ENCODE measurements at regions of chr5 and their contacts with region 1.

Region 1: GRCh38 chr5:68424799-68425537 is 209.4 kb downstream of the PIK3R1 start:
- DNase-seq: no peak
- ATAC-seq: no peak
- H3K4me3 ChIP-seq: no peak overlapping the region
- H3K27ac ChIP-seq: no peak overlapping the region
- H3K4me1 ChIP-seq: peaks cover 5% of the 10 kb centered on the region
- H3K27me3 ChIP-seq: no peaks in the 10 kb centered on the region
- CTCF ChIP-seq: no peak

Region 2: DNA sequence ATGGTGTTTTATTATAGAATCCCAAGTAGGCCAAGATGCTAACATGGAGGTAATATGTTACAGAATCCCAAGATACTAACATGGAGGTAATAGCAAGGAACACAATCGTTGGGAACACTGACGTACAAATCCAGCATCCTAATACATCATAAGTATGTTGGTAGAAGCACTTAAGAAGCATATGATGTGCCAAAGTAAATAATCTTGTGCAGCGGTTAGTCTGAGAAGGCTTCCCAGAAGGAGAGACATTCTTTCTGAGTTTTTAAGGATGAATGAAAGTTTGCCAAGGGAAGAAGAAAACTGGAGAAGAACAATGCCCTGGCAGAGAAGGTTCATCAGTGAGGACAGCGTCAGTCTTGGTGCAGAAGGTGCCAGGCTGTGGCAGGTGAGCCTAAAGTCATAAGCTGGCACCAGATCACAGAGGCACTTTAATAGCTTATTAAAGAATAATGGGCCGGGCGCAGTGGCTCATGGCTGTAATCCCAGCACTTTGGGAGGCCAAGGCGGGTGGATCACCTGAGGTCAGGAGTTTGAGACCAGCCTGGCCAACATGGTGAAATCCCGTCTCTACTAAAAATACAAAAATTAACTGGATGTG is 503.9 kb before region 1 on chr5:
- CTCF ChIA-PET with region 1: no interaction called
- POLR2A ChIA-PET with region 1: no interaction called
- in situ Hi-C with region 1: no loop called
- intact Hi-C with region 1: no loop called
- DNase-seq: no peak
- ATAC-seq: no peak
- H3K4me3 ChIP-seq: no peak overlapping the region
- H3K27ac ChIP-seq: no peak overlapping the region
- H3K4me1 ChIP-seq: no peaks in the 10 kb centered on the region
- H3K27me3 ChIP-seq: no peaks in the 10 kb centered on the region
- CTCF ChIP-seq: no peak

Region 3: GRCh38 chr5:68252673-68253623 is 172.0 kb before region 1 on chr5:
- CTCF ChIA-PET with region 1: no interaction called
- POLR2A ChIA-PET with region 1: no interaction called
- in situ Hi-C with region 1: no loop called
- intact Hi-C with region 1: no loop called
- DNase-seq: peak; percentile 35
- ATAC-seq: peak; percentile 91
- H3K4me3 ChIP-seq: no peak overlapping the region
- H3K27ac ChIP-seq: no peak overlapping the region
- H3K4me1 ChIP-seq: peaks cover 33% of the 10 kb centered on the region
- H3K27me3 ChIP-seq: no peaks in the 10 kb centered on the region
- CTCF ChIP-seq: peak; percentile 89

Region 4: DNA sequence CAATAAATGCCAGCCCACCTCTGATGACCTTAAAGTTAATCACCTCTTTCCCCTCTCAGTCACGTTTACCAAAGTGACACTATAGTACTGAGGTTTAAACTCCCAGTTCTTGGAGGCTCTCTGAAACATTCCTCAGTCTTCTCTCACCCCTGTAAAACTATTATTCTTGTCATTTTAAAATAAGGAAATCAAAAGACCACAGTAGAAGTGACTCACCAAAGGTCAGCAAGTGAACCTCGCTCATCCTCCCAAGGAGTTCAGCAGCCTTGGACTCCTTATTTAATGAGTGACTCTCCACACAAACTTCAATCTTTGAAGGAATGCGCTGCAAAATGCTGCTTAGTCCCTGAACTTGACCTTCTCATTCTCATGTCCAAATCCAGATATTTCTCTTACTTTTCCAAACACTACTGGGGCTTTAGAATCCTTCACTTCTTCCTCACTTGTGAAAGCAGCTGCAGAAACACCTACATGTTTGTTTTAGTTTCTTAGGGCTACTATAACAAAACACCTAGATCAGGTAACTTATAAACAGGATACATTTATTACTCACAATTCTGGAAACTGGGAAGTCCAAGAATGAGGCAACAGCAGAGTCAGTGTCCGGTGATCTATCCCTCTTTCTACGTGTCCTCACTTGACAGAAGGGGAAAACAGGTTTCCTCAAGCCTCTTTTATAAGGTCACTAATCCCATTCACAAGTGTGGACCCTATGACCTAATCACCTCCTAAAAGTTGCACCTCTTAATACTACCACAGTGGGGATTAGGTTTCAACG is 105.5 kb before region 1 on chr5:
- CTCF ChIA-PET with region 1: no interaction called
- POLR2A ChIA-PET with region 1: no interaction called
- in situ Hi-C with region 1: no loop called
- intact Hi-C with region 1: no loop called
- DNase-seq: no peak
- ATAC-seq: no peak
- H3K4me3 ChIP-seq: no peak overlapping the region
- H3K27ac ChIP-seq: no peak overlapping the region
- H3K4me1 ChIP-seq: no peaks in the 10 kb centered on the region
- H3K27me3 ChIP-seq: no peaks in the 10 kb centered on the region
- CTCF ChIP-seq: no peak

Region 5: DNA sequence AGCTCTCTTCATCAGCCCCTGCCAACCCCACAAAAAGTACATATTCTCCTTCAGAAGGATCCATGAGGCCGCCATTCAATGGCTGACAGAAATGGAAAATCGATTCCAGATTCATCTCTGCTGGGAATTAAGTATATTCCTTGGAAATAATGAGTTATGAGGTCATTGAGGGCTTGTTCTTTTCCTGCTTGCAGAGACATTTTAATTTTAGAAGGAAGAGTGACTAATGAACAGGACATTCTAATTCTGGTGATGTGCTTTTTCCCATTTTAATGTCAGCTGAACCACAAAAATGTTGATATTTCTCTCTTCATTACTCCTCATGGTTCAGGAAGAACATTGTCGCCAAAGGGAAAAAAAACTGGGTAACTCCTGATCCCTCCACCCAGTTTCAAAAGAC is 104.6 kb after region 1 on chr5:
- CTCF ChIA-PET with region 1: no interaction called
- POLR2A ChIA-PET with region 1: interaction called, 12 read pairs
- in situ Hi-C with region 1: no loop called
- intact Hi-C with region 1: no loop called
- DNase-seq: no peak
- ATAC-seq: no peak
- H3K4me3 ChIP-seq: no peak overlapping the region
- H3K27ac ChIP-seq: no peak overlapping the region
- H3K4me1 ChIP-seq: no peaks in the 10 kb centered on the region
- H3K27me3 ChIP-seq: no peaks in the 10 kb centered on the region
- CTCF ChIP-seq: no peak

Region 6: DNA sequence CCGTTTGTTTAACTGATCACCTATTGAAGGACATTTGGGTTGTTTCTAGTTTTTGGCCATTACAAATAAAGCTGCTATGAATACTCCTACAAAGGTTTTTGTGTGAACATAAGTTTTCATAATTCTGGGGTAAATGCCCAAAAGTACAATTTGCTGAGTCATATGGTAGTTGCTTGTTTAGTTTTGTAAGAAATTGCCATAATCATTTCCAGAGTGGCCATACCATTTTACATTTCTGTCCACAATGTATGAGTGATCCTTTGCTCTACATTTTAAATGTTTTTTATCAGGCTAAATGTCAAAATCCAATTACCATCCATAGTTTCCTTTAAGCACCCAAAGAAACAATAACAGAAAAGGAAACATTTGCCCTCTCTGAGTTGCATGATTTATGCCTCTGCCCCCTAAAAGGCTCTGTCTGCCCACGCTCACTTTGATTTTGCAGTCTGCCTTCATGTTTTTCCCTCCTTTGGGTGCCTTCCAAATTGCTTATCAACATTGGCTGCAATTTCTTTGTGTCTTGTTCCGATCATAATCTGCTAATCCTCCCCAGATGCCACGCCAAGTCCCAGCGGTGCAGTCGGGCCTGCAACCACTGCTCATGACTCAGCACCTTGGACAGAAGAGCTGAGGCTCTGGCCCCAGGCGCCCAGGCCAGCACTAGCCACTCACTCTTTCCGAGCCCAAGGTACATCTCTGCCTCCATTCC is 129.8 kb after region 1 on chr5:
- CTCF ChIA-PET with region 1: no interaction called
- POLR2A ChIA-PET with region 1: no interaction called
- in situ Hi-C with region 1: no loop called
- intact Hi-C with region 1: no loop called
- DNase-seq: no peak
- ATAC-seq: peak; percentile 78
- H3K4me3 ChIP-seq: no peak overlapping the region
- H3K27ac ChIP-seq: no peak overlapping the region
- H3K4me1 ChIP-seq: peaks cover 2% of the 10 kb centered on the region; the same call in 1 of the 2 replicates
- H3K27me3 ChIP-seq: no peaks in the 10 kb centered on the region
- CTCF ChIP-seq: no peak

Measured in Panc1 (cell line).